HepG2 (cell line): ENCODE measurements at regions of chr7 and their contacts with region 1.

Region 1: DNA sequence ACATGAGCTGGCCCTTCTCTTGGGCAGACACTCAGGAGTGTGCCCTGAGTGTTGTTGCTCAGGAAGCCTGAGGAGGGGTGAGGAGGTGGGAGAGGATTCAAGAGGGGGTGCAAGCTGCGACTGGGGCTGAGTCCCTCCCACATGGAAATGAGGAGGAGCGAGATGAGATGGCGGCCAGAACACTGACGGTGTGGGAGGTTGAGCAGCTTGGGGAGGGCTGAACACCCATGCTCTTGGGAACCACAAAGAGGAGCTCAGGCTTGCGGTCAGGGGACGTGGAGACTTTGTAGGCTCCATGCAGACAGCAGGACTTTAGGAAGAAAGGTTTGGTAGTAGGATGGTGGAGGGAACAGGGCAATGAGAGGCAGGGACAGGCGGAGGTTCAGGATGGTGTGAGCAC is 163.2 kb upstream of the SHH start:
- DNase-seq: no peak
- ATAC-seq: no peak
- H3K4me3 ChIP-seq: no peak overlapping the region
- H3K27ac ChIP-seq: no peak overlapping the region
- H3K4me1 ChIP-seq: no peaks in the 10 kb centered on the region
- H3K27me3 ChIP-seq: peaks cover 14 to 66% of the 10 kb centered on the region in 2 experiments
- CTCF ChIP-seq: no peak
- EP300 ChIP-seq: no peak
- POLR2A ChIP-seq: no peak
- RAD21 ChIP-seq: no peak

Region 2: GRCh38 chr7:155951554-155952158 is 23.8 kb before region 1 on chr7:
- CTCF ChIA-PET with region 1: no interaction called
- POLR2A ChIA-PET with region 1: interaction called, 3 read pairs
- in situ Hi-C with region 1: no loop called
- intact Hi-C with region 1: loop called (anchors 1 kb)
- DNase-seq: peak; percentile 97
- ATAC-seq: peak; percentile 89
- H3K4me3 ChIP-seq: peak overlapping the region; percentile 38 to 70 (median 47); a peak in 5 of 6 replicates
- H3K27ac ChIP-seq: peak overlapping the region; percentile 88
- H3K4me1 ChIP-seq: peaks cover 60% of the 10 kb centered on the region
- H3K27me3 ChIP-seq: 0 out of 5 replicates have a peak, but pooled peaks cover 0 to 10% of the 10 kb centered on the region in 2 experiments
- CTCF ChIP-seq: no peak; the same call in 1 of the 2 replicates
- EP300 ChIP-seq: peak; percentile 87 to 95
- POLR2A ChIP-seq: peak; percentile 80 to 92; a peak in 3 of 4 replicates
- RAD21 ChIP-seq: peak; percentile 9; the same call in 1 of the 2 replicates